CD4-positive, alpha-beta T cell (primary cell): ENCODE measurements at regions of chr11 and their contacts with region 1.

Region 1: DNA sequence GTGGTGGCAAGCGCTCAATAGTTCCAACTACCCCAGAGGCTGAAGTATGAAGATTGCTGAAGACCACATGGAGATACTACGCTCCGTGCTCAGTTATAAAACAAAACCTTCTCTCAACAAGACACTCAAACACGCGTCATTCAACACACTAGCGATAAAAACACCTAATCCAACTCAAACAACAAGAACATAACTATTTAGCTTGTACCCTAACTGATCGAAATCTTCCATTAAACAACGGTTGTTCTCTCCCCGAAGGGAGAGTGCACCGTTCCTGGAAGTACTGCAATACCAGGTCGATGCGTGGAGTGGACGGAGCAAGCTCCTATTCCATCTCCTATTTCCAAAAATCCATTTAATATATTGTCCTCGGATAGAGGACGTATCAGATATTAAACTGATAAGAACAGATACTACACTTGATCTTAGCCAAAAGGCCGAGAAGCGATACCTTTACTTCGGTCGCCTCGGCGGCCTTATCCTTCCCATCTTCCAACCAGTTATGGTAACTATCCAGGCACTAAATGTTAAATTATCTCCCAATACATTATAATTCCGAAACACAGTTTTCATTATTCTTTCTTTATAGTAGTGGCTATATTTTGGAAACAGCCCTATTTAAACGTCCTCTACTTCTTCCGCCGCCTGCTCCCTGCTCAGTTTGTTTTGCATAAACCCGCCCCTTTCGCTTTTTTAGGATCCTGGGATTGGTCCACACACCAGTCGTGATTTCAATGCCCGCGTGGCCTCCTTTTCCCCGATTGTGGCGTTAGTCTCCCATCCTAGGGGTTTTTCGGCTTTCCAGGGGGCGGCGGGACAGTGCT is 2.2 kb upstream of the WDR74 start:
- DNase-seq: peak; percentile 68 to 95 (median 81)
- ATAC-seq: peak; percentile 42
- H3K4me3 ChIP-seq: peak overlapping the region; percentile 72
- H3K4me3 Mint-ChIP-seq: no peak overlapping the region
- H3K27ac ChIP-seq: peak overlapping the region; percentile 97 to 100
- H3K27ac Mint-ChIP-seq: no peak overlapping the region
- H3K4me1 ChIP-seq: peaks cover 44% of the 10 kb centered on the region
- H3K4me1 Mint-ChIP-seq: peaks cover 22% of the 10 kb centered on the region
- H3K27me3 ChIP-seq: no peaks in the 10 kb centered on the region
- H3K27me3 Mint-ChIP-seq: no peaks in the 10 kb centered on the region
- CTCF ChIP-seq: no peak

Region 2: DNA sequence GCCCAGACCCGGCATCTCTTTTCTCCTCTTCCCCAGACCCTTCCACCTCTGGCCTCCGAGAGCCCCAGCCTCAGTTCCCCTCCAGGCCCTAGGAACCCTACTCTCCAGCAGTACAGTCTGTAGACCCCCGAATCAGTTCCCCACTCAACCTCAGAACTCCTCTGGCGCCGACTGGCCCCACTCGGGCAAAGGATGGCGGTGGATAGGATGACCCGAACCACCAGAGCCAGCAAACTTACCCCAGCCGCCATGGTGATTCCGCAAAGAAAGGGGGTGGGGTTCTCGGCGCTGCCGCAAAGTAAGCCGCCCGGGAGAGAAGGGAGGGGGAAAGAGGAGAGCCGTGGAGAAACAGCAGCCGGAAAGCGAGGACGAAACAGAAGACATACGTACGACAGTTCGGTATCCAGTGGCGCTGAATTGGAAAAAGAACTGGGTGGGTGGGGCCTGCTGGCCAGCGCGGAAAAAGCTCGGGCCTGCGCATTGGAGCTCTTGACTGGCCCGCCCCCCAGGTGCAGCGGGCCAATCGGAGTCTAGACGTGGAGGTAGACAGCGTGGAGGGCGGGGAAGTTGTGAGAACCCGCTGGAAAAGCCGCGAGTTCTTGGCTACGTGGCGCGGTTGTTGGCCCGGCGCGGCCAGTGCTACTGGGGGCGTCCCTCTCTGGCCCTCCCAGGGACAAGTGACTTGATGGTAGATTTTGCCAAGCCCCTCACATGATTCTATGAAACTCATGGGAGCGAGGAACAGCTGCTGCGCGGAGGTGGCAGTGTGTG is 267.8 kb before region 1 on chr11 and contains the start of gene EEF1G:
- CTCF ChIA-PET with region 1: no interaction called
- POLR2A ChIA-PET with region 1: interaction called, 33 read pairs
- intact Hi-C with region 1: no loop called
- DNase-seq: peak; percentile 95 to 100 (median 97)
- ATAC-seq: peak; percentile 94
- H3K4me3 ChIP-seq: peak within 1 kb of the TSS; percentile 82
- H3K4me3 Mint-ChIP-seq: peak within 1 kb of the TSS; percentile 93
- H3K27ac ChIP-seq: peak within 1 kb of the TSS; percentile 76 to 83
- H3K27ac Mint-ChIP-seq: peak within 1 kb of the TSS; percentile 89
- H3K4me1 ChIP-seq: peaks cover 48% of the 10 kb centered on the region
- H3K4me1 Mint-ChIP-seq: peaks cover 55% of the 10 kb centered on the region
- H3K27me3 ChIP-seq: no peaks in the 10 kb centered on the region
- H3K27me3 Mint-ChIP-seq: no peaks in the 10 kb centered on the region
- CTCF ChIP-seq: no peak
- total RNA-seq, gene EEF1G: 2,181 to 2,269 TPM

Region 3: GRCh38 chr11:62652161-62653006 is 189.2 kb before region 1 on chr11:
- CTCF ChIA-PET with region 1: no interaction called
- POLR2A ChIA-PET with region 1: interaction called, 10 read pairs
- intact Hi-C with region 1: no loop called
- DNase-seq: peak in 4 of 14 experiments; percentile 43 to 62 (median 51)
- ATAC-seq: peak; percentile 5
- H3K4me3 ChIP-seq: peak overlapping the region; percentile 96
- H3K4me3 Mint-ChIP-seq: peak overlapping the region; percentile 94
- H3K27ac ChIP-seq: peak overlapping the region; percentile 89 to 94
- H3K27ac Mint-ChIP-seq: peak overlapping the region; percentile 97
- H3K4me1 ChIP-seq: peaks cover 28% of the 10 kb centered on the region
- H3K4me1 Mint-ChIP-seq: peaks cover 17% of the 10 kb centered on the region
- H3K27me3 ChIP-seq: no peaks in the 10 kb centered on the region
- H3K27me3 Mint-ChIP-seq: no peaks in the 10 kb centered on the region
- CTCF ChIP-seq: no peak

Region 4: DNA sequence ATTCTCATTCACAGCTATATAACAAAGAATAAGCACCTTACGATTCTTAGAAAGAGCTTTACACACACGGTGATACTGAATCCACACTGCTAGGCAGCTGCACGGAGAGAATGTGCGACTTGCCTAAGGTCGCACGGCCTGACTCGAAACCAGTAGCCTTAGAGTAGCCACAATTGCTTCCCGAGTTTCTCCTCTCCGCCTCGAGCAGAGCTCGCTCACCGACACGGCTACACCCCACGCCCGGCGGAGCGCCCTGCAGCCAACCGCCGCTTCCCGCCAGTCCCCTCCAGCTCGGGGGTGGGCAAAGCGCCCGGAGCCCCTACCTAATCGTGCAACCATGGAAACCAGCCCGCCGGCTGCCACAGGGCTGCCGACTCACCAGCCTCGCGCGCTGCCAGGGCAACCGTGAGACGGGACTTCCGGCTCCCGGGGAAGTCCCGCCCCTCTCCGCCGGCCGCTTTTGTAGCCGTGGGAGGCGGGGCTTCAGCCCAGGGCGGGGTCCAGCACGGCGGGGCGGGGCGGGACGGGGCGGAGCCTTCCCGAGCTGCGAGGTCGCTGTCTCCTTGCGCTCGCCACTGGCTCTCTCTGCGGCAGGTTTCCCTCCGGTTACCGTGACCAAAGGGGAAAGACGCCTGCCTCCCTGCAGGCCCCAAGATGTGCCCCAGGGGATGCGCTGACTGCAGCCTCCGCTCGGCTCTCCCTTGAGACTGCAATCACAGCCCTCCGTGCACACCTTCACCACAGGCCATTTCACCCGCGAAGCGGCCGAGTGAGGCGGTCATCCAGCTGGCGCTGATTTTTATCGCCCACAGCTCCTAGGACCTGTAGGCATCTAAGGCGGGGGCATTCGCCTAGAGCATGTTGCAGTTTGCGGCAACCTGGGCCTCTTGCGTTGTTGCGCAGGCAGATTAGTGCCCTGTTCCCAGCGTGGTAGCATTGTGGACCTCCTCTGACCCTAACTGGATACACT is 135.4 kb before region 1 on chr11:
- CTCF ChIA-PET with region 1: no interaction called
- POLR2A ChIA-PET with region 1: interaction called, 80 read pairs
- intact Hi-C with region 1: loop called in 1 of 2 experiments (anchors 1 kb)
- DNase-seq: peak; percentile 90 to 97 (median 94)
- ATAC-seq: peak; percentile 62
- H3K4me3 ChIP-seq: peak overlapping the region; percentile 79
- H3K4me3 Mint-ChIP-seq: peak overlapping the region; percentile 86
- H3K27ac ChIP-seq: peak overlapping the region; percentile 65 to 84
- H3K27ac Mint-ChIP-seq: peak overlapping the region; percentile 92
- H3K4me1 ChIP-seq: peaks cover 49% of the 10 kb centered on the region
- H3K4me1 Mint-ChIP-seq: peaks cover 42% of the 10 kb centered on the region
- H3K27me3 ChIP-seq: no peaks in the 10 kb centered on the region
- H3K27me3 Mint-ChIP-seq: no peaks in the 10 kb centered on the region
- CTCF ChIP-seq: no peak

Region 5: DNA sequence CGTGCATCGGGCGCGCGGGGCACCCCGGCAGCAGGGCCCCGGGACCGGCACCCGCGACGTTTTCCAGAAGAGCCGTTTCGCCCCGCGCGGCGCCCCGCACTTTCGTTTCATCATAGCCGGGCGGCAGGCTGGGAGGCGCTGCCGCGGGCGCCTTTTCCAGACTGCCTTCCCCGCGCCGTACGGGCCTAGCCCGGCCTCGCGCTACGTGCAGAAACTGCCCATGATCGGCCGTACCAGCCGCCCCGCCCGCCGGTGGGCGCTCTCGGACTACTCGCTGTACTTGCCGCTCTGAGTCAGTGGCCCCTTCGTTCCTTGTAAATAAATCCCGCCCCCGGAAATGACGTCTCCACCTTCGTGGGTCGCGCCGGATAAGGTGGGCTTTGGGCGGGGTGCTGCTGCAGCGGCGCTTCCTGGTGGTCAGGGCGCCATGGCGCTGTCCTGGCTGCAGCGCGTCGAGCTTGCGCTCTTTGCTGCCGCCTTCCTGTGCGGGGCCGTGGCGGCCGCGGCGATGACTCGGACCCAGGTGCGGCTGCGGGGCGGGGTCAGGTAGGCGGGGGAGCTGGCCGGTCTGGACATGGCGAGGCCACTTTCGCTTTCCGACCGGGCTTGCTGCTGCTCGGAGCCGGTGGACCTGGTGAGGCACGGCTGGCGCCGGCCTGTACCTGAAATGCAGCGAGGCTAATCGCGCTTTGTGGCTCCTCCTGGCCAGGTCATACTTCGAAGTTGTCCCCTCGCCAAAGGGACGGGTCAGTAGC is 54.4 kb before region 1 on chr11 and contains the start of gene TMEM179B:
- CTCF ChIA-PET with region 1: interaction called, 29 read pairs
- POLR2A ChIA-PET with region 1: interaction called, 273 read pairs
- intact Hi-C with region 1: loop called (anchors 1 to 2 kb)
- DNase-seq: peak; percentile 90 to 99 (median 97)
- ATAC-seq: peak; percentile 61
- H3K4me3 ChIP-seq: peak within 1 kb of the TSS; percentile 77
- H3K4me3 Mint-ChIP-seq: peak within 1 kb of the TSS; percentile 98
- H3K27ac ChIP-seq: peak within 1 kb of the TSS; percentile 80 to 92
- H3K27ac Mint-ChIP-seq: peak within 1 kb of the TSS; percentile 98
- H3K4me1 ChIP-seq: peaks cover 53% of the 10 kb centered on the region
- H3K4me1 Mint-ChIP-seq: peaks cover 55% of the 10 kb centered on the region
- H3K27me3 ChIP-seq: no peaks in the 10 kb centered on the region
- H3K27me3 Mint-ChIP-seq: no peaks in the 10 kb centered on the region
- CTCF ChIP-seq: no peak
- total RNA-seq, gene TMEM179B: 34.7 to 37.4 TPM

Region 6: GRCh38 chr11:62860835-62861563 is 19.4 kb after region 1 on chr11:
- CTCF ChIA-PET with region 1: interaction called, 8 read pairs
- POLR2A ChIA-PET with region 1: interaction called, 599 read pairs
- intact Hi-C with region 1: no loop called
- DNase-seq: no peak
- ATAC-seq: no peak
- H3K4me3 ChIP-seq: no peak overlapping the region
- H3K4me3 Mint-ChIP-seq: no peak overlapping the region
- H3K27ac ChIP-seq: no peak overlapping the region
- H3K27ac Mint-ChIP-seq: no peak overlapping the region
- H3K4me1 ChIP-seq: peaks cover 18% of the 10 kb centered on the region
- H3K4me1 Mint-ChIP-seq: peaks cover 18% of the 10 kb centered on the region
- H3K27me3 ChIP-seq: no peaks in the 10 kb centered on the region
- H3K27me3 Mint-ChIP-seq: no peaks in the 10 kb centered on the region
- CTCF ChIP-seq: no peak